ENCODE measurements at regions of chr20 and their contacts with region 1.

Region 1: DNA sequence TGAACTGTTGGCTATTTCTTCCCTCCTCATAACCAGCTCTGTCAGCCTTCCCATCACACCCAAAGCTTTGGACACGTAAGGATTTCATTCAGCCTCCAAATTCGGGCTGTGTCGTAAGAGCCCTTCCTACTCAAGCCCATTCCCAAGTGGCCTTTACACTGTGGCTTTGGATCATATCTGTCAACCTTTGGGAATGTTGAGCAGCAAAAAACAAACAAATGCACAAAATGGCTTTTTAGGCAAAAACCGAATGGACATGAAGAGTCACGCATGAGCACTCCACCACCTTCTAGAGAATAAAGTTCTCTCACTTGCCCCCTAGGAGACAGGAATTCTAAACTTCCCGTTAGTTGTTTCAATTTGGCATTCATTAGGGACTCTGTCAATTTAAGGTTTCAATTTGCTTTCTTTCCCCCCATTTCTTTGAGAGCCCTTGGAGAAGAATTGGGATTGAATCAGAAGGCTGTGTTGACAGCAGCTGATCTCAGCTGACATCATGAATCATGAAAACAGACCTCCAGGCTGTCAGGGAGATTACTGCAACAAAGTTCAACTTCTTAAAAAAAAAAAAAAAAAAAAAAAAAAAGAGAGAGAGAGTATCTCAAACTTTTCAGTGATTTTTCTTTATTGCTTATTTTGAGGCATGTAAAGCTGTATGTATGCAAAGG is 110.3 kb downstream of the BCAS1 start:
- DNase-seq: peak in 1 of 5 donors; percentile 26
- ATAC-seq: peak in 3 of 4 donors; percentile 54 to 83 (median 72)
- H3K4me3 ChIP-seq: peak overlapping the region in 2 of 12 donors; percentile 7 to 18
- H3K27ac ChIP-seq: peak overlapping the region in 6 of 12 donors; percentile 0 to 56 (median 26)
- H3K4me1 ChIP-seq: peaks cover 0 to 9% (median 0%) of the 10 kb centered on the region in 12 donors
- H3K27me3 ChIP-seq: no peaks in the 10 kb centered on the region
- CTCF ChIP-seq: no peak
- POLR2A ChIP-seq: no peak

Region 2: DNA sequence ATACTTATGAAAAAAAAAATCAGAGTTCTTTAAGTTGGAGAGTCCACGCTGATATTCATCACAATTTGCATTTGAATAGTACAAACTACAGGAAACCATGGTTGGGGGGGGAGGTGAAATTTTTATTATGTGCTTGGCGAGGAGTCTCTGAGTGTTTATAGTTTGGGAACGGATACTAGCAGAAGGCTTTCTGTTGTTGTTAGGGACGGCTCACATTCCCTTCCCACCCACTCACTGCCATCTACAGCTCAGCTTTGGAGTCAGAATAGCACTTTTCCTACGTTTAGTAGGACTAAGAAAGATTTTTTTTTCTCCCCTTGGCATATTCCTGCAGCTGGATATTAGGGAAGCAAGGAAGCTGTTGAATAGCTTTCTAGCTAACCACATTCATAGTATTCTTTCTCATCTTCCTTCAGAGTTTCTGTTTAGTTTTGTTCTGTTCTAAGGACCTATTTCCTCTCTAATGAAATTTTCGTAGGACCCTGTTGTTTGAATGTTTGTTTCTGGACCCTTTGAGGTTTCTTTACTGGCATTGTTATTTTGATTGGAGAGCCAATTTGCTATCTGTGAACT is 131.3 kb before region 1 on chr20:
- intact Hi-C with region 1: no loop called
- DNase-seq: peak in 3 of 5 donors; percentile 29 to 53 (median 39)
- ATAC-seq: peak; percentile 74 to 88 (median 84)
- H3K4me3 ChIP-seq: peak overlapping the region in 10 of 12 donors; percentile 13 to 45 (median 32)
- H3K27ac ChIP-seq: peak overlapping the region; percentile 74 to 93 (median 86)
- H3K4me1 ChIP-seq: peaks cover 0 to 48% (median 13%) of the 10 kb centered on the region in 12 donors
- H3K27me3 ChIP-seq: no peaks in the 10 kb centered on the region
- CTCF ChIP-seq: peak in 3 of 12 donors; percentile 26 to 35 (median 27)
- POLR2A ChIP-seq: no peak

Region 3: DNA sequence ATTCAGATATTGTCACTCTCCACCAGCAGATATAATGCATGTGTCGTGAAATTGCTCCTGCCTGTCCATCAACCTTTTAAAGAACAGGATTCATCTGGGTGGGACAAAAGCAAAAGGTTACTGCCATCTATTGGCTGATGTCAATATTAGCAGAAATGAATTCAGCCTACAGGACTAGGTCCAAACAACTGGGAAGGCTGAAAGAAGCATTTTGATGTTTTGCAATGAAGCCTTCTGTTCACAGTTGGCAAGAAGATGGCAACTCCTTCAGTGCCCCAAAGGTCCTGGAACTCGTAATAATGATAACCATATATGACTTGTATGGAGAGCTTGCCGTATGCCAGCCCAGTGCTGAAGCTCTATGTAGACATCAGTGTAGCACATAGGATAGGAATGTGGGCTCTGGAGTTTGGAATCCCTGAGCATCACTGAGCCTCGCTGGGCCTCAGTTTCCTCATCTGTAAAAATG is 102.8 kb after region 1 on chr20:
- intact Hi-C with region 1: loop called in 1 of 10 experiments (anchors 5 kb)
- DNase-seq: no peak
- ATAC-seq: peak in 2 of 4 donors; percentile 66 to 74
- H3K4me3 ChIP-seq: no peak overlapping the region
- H3K27ac ChIP-seq: no peak overlapping the region
- H3K4me1 ChIP-seq: peaks cover 0 to 9% (median 0%) of the 10 kb centered on the region in 12 donors
- H3K27me3 ChIP-seq: peaks cover 0 to 12% (median 0%) of the 10 kb centered on the region in 9 donors
- CTCF ChIP-seq: peak; percentile 27 to 71 (median 62)
- POLR2A ChIP-seq: no peak

Region 4: DNA sequence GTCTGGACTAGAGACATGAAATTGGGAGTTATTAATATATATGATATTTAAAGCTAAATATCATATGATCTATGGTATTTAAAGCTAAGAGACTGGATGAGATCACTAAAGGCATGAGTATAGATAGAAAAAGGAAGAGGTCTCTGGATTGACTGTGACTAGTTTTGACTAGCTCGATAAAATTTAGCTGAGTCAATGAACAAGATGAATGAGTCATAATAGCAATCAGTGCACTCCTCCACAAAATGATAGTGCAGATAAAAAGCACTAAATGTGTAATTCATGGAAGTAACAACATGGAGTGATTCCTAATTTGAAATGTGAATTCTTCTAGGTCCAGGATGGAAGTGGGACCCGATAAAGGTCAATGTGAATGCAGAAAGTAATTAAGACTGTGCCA is 375.3 kb after region 1 on chr20:
- intact Hi-C with region 1: no loop called
- DNase-seq: no peak
- ATAC-seq: no peak
- H3K4me3 ChIP-seq: no peak overlapping the region
- H3K27ac ChIP-seq: no peak overlapping the region
- H3K4me1 ChIP-seq: no peaks in the 10 kb centered on the region
- H3K27me3 ChIP-seq: no peaks in the 10 kb centered on the region
- CTCF ChIP-seq: no peak
- POLR2A ChIP-seq: no peak

Region 5: DNA sequence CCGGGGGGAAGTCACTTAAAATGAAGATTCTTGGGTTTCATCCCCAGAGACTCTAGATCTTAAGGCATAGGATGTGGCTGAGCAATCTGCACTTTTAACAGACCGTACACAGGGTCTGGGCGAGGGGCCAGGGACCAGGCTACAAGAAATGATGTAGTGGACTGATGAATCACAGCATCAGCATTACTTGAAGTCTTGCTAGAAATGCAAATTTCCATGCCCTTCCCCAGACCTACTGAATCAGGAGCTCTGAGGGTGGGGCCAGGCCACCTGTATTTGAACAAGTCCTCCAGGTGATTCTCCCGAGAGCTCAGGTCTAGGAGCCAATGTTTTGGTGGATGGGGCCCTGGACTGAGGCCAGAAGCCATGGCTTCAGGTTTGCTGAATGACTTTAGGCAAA is 683.7 kb after region 1 on chr20:
- intact Hi-C with region 1: no loop called
- DNase-seq: peak in 2 of 5 donors; percentile 30 to 68
- ATAC-seq: peak in 2 of 4 donors; percentile 26 to 49
- H3K4me3 ChIP-seq: no peak overlapping the region
- H3K27ac ChIP-seq: no peak overlapping the region
- H3K4me1 ChIP-seq: no peaks in the 10 kb centered on the region
- H3K27me3 ChIP-seq: no peaks in the 10 kb centered on the region
- CTCF ChIP-seq: no peak
- POLR2A ChIP-seq: no peak